A549 (cell line): ENCODE measurements at regions of chr13 and their contacts with region 1.

Region 1: GRCh38 chr13:52128714-52129700 is at the start of gene NEK5:
- DNase-seq: peak; percentile 47 to 70
- ATAC-seq: peak; percentile 93 to 95
- H3K4me3 ChIP-seq: peak within 1 kb of the TSS; percentile 63
- H3K27ac ChIP-seq: peak within 1 kb of the TSS in 1 of 2 experiments; percentile 79; a peak in 3 of 6 replicates
- H3K4me1 ChIP-seq: no peaks in the 10 kb centered on the region
- CTCF ChIP-seq: peak; percentile 65
- EP300 ChIP-seq: no peak
- POLR2A ChIP-seq: no peak
- RAD21 ChIP-seq: peak; percentile 40 to 66; a peak in 4 of 5 replicates
- polyA plus RNA-seq, gene NEK5: 0.17 and 0.23 TPM in 2 replicates

Region 2: GRCh38 chr13:51814825-51815650 is 314.0 kb before region 1 on chr13:
- CTCF ChIA-PET with region 1: interaction called, 60 read pairs
- POLR2A ChIA-PET with region 1: no interaction called
- DNase-seq: peak; percentile 45 to 60
- ATAC-seq: peak; percentile 67 to 91; a peak in 5 of 6 replicates
- H3K4me3 ChIP-seq: peak overlapping the region; percentile 8; the same call in 1 of the 3 replicates
- H3K27ac ChIP-seq: peak overlapping the region; percentile 34 to 51; a peak in 1 of 6 replicates
- H3K4me1 ChIP-seq: peaks cover 17% of the 10 kb centered on the region; the same call in 1 of the 3 replicates
- CTCF ChIP-seq: peak; percentile 70
- EP300 ChIP-seq: no peak
- POLR2A ChIP-seq: no peak
- RAD21 ChIP-seq: peak; percentile 68

Region 3: GRCh38 chr13:51895906-51896888 is 232.8 kb before region 1 on chr13:
- CTCF ChIA-PET with region 1: interaction called, 81 read pairs
- POLR2A ChIA-PET with region 1: interaction called, 3 read pairs
- DNase-seq: peak; percentile 41 to 47
- ATAC-seq: peak; percentile 95 to 98
- H3K4me3 ChIP-seq: no peak overlapping the region
- H3K27ac ChIP-seq: no peak overlapping the region
- H3K4me1 ChIP-seq: no peaks in the 10 kb centered on the region
- CTCF ChIP-seq: peak; percentile 60
- EP300 ChIP-seq: no peak
- POLR2A ChIP-seq: no peak
- RAD21 ChIP-seq: peak; percentile 63 to 70

Region 4: GRCh38 chr13:52001120-52001731 is 127.8 kb before region 1 on chr13:
- CTCF ChIA-PET with region 1: interaction called, 22 read pairs
- POLR2A ChIA-PET with region 1: no interaction called
- DNase-seq: peak; percentile 40 to 46
- ATAC-seq: peak; percentile 68 to 82; a peak in 3 of 6 replicates
- H3K4me3 ChIP-seq: no peak overlapping the region
- H3K27ac ChIP-seq: no peak overlapping the region
- H3K4me1 ChIP-seq: no peaks in the 10 kb centered on the region
- CTCF ChIP-seq: peak; percentile 52
- EP300 ChIP-seq: no peak
- POLR2A ChIP-seq: no peak
- RAD21 ChIP-seq: peak; percentile 53 to 55; a peak in 4 of 5 replicates

Region 5: DNA sequence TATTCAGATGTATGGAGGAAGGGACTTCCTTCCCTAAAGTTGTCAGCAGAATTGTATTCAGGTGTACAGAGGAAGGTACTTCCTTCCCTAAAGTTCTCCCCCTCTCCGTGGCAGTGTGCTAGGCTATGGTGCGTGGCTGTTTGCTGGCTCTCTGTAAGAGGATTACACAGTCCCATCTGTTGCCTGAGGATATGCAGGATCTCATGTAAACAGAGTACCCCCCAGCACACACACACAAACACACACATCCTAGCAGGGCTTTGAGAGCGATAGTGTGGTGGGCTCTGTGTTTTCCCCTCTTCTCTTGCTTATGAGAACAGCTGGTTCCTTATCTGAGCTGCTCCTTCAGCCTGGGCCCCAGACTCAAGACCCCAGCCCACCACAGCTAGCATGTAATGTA is 10.4 kb before region 1 on chr13:
- CTCF ChIA-PET with region 1: interaction called, 11 read pairs
- POLR2A ChIA-PET with region 1: no interaction called
- DNase-seq: no peak
- ATAC-seq: no peak
- H3K4me3 ChIP-seq: no peak overlapping the region
- H3K27ac ChIP-seq: no peak overlapping the region
- H3K4me1 ChIP-seq: no peaks in the 10 kb centered on the region
- CTCF ChIP-seq: no peak
- EP300 ChIP-seq: no peak
- POLR2A ChIP-seq: no peak
- RAD21 ChIP-seq: no peak